Adrenal gland (tissue), 19 donors: ENCODE measurements at regions of chr1 and their contacts with region 1.

Region 1: DNA sequence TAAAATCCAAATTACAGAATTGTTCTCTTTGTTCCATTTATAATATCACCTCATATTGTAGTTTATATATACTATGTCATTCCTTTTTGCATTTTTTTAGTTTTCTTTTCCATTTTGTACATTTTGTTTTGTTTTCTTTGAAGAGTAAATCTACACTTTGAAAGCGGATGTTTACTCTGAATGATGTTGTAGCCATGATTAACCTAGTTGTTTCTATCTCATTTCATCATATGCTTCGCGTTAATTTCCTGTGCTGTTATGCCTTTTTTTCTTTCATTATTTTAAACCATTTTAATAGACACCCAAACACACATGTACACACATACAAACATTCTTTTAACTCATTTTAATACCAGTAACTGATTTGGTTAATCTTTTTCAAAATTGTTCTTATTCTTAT is 5.3 kb downstream of the OR2T6 start:
- DNase-seq: no peak
- H3K4me3 ChIP-seq: no peak overlapping the region
- H3K27ac ChIP-seq: no peak overlapping the region
- H3K4me1 ChIP-seq: no peaks in the 10 kb centered on the region
- H3K27me3 ChIP-seq: no peaks in the 10 kb centered on the region
- CTCF ChIP-seq: no peak
- POLR2A ChIP-seq: no peak

Region 2: DNA sequence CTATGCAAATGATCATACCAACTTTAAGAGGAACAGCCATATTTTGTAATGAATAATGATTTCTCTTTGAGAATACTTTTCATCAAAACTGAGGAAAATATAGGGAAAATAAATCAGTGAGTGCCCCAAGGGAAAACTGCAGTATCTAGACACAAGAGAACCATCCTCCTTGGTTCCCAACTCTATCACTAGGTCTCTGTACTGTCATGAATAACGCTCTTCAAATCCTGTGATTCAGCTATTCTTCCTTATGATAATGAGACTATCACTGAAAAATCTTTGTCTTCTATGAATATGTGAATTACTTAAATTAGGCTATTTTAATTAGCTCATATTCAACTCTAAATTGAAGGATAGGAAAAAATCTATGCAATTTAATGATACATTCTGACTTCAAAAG is 365.1 kb before region 1 on chr1:
- intact Hi-C with region 1: loop called in 1 of 2 experiments (anchors 5 kb)
- DNase-seq: no peak
- H3K4me3 ChIP-seq: no peak overlapping the region
- H3K27ac ChIP-seq: no peak overlapping the region
- H3K4me1 ChIP-seq: no peaks in the 10 kb centered on the region
- H3K27me3 ChIP-seq: no peaks in the 10 kb centered on the region
- CTCF ChIP-seq: no peak
- POLR2A ChIP-seq: no peak

Region 3: DNA sequence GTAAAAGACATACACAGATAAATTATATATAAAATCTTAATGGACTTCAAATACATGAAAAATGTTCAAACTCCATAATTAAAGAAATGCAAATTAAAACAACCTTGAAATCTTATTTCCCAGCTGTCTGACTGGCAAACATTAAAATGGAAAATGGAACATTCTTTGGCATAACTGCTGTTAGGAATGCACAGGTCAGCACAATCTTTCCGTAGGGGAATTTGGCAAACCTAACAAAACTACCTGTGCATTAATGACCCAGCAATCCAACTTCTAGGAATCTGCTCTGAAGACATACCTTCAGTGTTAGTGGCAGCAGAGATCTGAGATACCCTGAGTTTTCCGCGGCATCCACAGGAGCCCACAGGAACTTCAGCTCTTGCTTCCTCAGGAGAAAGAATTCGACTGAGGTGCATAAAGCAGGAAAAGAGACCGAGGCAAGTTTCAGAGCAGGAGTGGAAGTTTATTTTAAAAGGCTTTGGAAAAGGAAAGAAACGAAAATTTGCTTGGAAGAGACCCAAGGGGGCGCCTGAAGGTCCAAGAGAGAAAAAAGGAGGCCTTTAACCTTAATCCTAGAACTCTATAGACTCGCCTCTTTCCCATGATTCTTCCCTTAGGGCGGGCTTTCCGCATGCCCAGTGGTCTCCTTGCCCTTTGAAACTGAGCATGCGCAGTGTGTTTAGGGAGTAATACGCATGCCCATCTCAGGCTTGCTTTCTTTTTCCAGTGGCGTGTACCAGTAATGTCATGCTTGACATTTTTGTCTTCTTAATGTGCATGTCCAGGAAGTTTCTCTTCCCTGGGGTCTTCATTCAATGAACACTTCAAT is 349.9 kb after region 1 on chr1:
- intact Hi-C with region 1: no loop called
- DNase-seq: no peak
- H3K4me3 ChIP-seq: no peak overlapping the region
- H3K27ac ChIP-seq: no peak overlapping the region
- H3K4me1 ChIP-seq: no peaks in the 10 kb centered on the region
- H3K27me3 ChIP-seq: no peaks in the 10 kb centered on the region
- CTCF ChIP-seq: no peak
- POLR2A ChIP-seq: no peak